ENCODE measurements at regions of chr3 and their contacts with region 1.

Region 1: DNA sequence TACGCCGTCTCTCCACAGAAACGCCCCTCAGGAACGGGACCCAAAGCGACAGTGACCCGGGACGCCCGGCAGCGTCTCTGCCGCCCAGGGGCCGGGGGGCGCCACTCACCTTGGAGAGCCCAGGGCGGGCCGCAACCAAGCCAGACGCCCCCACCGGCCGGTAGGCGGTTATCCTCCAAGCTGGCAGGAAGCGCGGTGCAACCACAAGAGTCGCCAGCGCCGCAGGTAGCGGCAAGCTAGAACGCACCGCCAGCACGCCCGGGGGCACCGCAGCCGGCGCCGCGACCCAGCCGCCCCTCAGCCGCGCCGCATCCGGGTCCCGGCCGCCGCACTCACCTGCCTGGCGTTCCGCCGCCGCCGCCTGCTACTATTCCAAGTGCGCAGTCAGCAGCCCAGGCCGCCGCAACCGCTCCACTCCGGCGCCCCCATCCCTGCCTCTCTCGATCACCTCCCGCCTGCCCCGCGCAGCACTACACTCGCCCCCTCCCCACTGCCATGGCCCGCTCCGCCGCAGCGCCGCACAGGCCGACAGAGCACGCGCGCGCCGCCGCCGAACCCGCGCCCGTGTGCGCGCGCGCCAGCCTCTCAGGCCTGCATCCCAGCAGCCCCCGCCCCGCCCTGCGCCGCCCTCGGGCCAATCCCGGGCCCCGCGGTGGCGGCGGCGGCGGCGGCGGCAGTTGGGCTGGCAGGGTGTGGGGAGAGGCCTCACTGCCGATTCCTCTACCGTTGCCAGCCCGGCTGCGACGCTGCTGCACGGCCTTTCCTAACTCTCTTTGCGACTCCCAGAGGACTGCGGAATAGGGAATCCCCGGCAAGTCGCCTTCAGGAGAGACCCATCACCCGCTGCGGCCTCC is at the start of gene PIK3CB:
- DNase-seq: peak; percentile 71 to 93 (median 87)
- ATAC-seq: peak; percentile 86
- H3K4me3 ChIP-seq: peak within 1 kb of the TSS; percentile 73 to 86
- H3K4me3 Mint-ChIP-seq: peak within 1 kb of the TSS; percentile 89
- H3K27ac ChIP-seq: peak within 1 kb of the TSS; percentile 68 to 87
- H3K27ac Mint-ChIP-seq: peak within 1 kb of the TSS; percentile 96
- H3K4me1 ChIP-seq: peaks cover 12% of the 10 kb centered on the region
- H3K4me1 Mint-ChIP-seq: peaks cover 28% of the 10 kb centered on the region
- H3K27me3 ChIP-seq: no peaks in the 10 kb centered on the region
- H3K27me3 Mint-ChIP-seq: no peaks in the 10 kb centered on the region
- CTCF ChIP-seq: no peak
- total RNA-seq, gene PIK3CB: 14.7 to 15.0 TPM

Region 2: DNA sequence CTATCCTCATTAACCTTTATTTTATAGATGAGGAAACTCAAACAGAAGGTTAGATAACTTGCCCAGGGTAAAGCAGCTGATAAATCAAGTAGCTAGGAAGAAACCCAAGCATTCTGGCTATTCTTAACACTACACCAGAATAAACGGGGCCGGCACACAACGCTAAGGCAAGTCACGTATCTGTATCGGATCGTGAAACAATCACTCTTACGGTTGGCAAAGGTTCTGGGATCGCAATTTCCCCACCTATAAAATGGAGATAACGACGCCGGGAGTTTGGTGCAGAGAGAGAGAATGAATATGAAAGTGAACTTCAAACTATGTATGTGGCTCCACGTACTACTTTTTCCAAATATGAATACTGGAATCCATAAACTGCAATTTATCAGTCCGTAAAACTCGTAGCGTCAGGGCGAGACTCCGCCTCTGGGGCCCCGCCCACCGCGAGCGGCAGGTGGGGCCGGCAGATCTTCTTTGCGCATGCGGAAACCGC is 647.7 kb before region 1 on chr3:
- CTCF ChIA-PET with region 1: no interaction called
- POLR2A ChIA-PET with region 1: no interaction called
- intact Hi-C with region 1: loop called (anchors 5 to 10 kb)
- DNase-seq: peak; percentile 79 to 95 (median 89)
- ATAC-seq: peak; percentile 95
- H3K4me3 ChIP-seq: peak overlapping the region; percentile 94
- H3K4me3 Mint-ChIP-seq: peak overlapping the region; percentile 97
- H3K27ac ChIP-seq: peak overlapping the region; percentile 90 to 92
- H3K27ac Mint-ChIP-seq: peak overlapping the region; percentile 98
- H3K4me1 ChIP-seq: peaks cover 29% of the 10 kb centered on the region
- H3K4me1 Mint-ChIP-seq: peaks cover 40% of the 10 kb centered on the region
- H3K27me3 ChIP-seq: peaks cover 0 to 3% of the 10 kb centered on the region in 2 experiments
- H3K27me3 Mint-ChIP-seq: peaks cover 5% of the 10 kb centered on the region
- CTCF ChIP-seq: no peak

Region 3: DNA sequence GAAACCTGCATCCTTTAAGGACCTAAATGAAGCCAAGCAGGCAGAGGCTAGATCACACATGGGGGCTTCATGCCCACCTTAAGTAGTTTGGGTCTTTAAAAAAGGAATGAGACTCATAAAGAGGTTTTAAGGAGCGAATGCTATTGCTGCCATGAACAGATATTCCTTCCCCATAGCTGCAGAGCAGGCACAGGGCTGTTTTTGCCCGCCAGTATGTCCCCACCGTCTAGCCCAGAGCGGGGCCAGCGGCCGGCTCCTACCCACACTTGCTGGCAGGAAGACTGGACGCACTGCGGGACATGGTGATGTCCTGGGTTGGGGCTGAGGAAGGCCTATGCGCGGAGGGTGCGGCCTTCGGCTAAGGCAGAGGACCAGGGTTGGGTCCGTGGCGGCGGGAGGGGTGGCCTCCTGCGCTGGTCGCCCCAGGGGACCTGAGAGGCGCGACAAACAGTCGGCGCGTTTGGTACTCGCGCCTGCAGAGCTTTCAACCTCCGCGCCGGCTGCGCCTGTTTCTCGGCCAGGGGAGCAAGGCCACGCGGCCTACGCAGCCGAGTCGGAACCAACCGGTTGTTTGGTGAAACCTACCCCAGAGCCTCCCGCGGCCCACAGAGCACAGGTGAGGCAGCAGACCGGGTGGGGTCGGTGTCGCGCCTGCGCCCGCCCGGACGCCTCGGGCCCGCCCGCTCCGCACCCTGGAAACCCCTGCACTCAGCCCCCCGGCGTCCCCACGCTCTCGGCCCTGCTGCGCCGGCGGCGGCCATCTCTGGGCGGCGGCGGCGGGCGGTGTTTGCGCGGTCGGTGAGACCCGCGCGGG is 226.1 kb before region 1 on chr3 and contains the start of gene FAIM:
- CTCF ChIA-PET with region 1: no interaction called
- POLR2A ChIA-PET with region 1: no interaction called
- intact Hi-C with region 1: loop called (anchors 5 kb)
- DNase-seq: peak; percentile 52 to 84 (median 70)
- ATAC-seq: peak; percentile 76
- H3K4me3 ChIP-seq: peak within 1 kb of the TSS; percentile 71 to 83
- H3K4me3 Mint-ChIP-seq: peak within 1 kb of the TSS; percentile 86
- H3K27ac ChIP-seq: peak within 1 kb of the TSS; percentile 84 to 86
- H3K27ac Mint-ChIP-seq: peak within 1 kb of the TSS; percentile 96
- H3K4me1 ChIP-seq: peaks cover 14% of the 10 kb centered on the region
- H3K4me1 Mint-ChIP-seq: peaks cover 15% of the 10 kb centered on the region
- H3K27me3 ChIP-seq: no peaks in the 10 kb centered on the region
- H3K27me3 Mint-ChIP-seq: no peaks in the 10 kb centered on the region
- CTCF ChIP-seq: no peak
- total RNA-seq, gene FAIM: 2.0 to 2.6 TPM

Region 4: GRCh38 chr3:138705675-138706074 is 128.9 kb before region 1 on chr3:
- CTCF ChIA-PET with region 1: no interaction called
- POLR2A ChIA-PET with region 1: no interaction called
- intact Hi-C with region 1: loop called in 1 of 2 experiments (anchors 5 kb)
- DNase-seq: no peak
- ATAC-seq: no peak
- H3K4me3 ChIP-seq: no peak overlapping the region
- H3K4me3 Mint-ChIP-seq: no peak overlapping the region
- H3K27ac ChIP-seq: no peak overlapping the region
- H3K27ac Mint-ChIP-seq: no peak overlapping the region
- H3K4me1 ChIP-seq: no peaks in the 10 kb centered on the region
- H3K4me1 Mint-ChIP-seq: no peaks in the 10 kb centered on the region
- H3K27me3 ChIP-seq: no peaks in the 10 kb centered on the region
- H3K27me3 Mint-ChIP-seq: no peaks in the 10 kb centered on the region
- CTCF ChIP-seq: no peak

Region 5: DNA sequence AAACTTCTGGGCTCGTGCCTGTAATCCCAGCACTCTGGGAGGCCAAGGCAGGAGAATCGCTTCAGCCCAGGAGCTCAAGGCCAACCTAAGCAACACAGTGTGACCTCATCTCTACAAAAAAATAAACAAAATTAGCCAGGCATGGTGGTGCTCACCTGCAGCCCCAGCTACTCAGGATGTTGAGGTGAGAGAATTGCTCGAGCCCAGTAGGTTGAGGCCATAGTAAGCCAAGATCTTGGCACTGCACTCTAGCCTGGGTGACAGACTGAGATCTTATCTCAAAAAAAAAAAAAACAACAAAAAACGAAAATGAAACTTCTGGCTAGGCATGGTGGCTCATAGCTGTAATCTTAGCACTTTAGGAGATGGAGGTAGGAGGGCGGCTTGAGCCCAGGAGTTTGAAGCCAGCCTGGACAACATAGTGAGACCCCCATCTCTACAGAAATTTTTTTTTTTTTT is 53.5 kb before region 1 on chr3:
- CTCF ChIA-PET with region 1: no interaction called
- POLR2A ChIA-PET with region 1: no interaction called
- intact Hi-C with region 1: loop called (anchors 2 kb)
- DNase-seq: peak; percentile 29 to 89 (median 55)
- ATAC-seq: peak; percentile 97
- H3K4me3 ChIP-seq: no peak overlapping the region
- H3K4me3 Mint-ChIP-seq: peak overlapping the region; percentile 54
- H3K27ac ChIP-seq: peak overlapping the region; percentile 39 to 66
- H3K27ac Mint-ChIP-seq: peak overlapping the region; percentile 92
- H3K4me1 ChIP-seq: peaks cover 11% of the 10 kb centered on the region
- H3K4me1 Mint-ChIP-seq: peaks cover 29% of the 10 kb centered on the region
- H3K27me3 ChIP-seq: no peaks in the 10 kb centered on the region
- H3K27me3 Mint-ChIP-seq: no peaks in the 10 kb centered on the region
- CTCF ChIP-seq: no peak

Region 6: DNA sequence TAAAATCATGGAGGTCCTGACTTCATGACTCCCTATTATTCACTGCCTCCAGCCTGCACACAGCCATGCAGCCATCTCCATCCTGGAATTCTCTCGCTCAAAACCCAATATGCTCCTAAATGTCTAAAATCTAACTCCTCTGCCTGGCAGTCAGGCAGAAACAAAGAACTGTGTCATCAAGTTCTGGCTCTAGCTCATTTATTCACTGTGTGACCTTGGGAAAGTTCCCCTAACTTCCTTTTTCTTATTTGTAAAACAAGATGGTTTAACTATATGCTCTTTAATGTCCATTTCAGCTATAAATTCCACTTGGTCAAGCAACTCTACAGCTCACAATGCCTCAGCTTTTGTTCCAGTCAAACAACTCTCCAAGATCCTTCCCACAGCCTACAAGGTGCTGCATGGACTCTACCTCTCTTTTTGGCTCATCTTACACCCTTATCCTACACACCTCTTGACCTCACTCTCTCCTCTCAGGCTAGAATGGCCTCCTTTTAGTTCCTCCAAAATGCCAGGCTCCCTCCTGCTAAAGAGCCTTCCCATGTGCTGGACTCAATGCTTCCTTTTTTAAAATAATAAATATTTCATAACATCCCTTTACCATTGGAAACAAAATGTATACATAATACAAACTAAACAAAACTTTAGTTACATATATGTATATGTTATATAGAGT is 16.3 kb before region 1 on chr3:
- CTCF ChIA-PET with region 1: no interaction called
- POLR2A ChIA-PET with region 1: no interaction called
- intact Hi-C with region 1: loop called (anchors 1 to 2 kb)
- DNase-seq: no peak
- ATAC-seq: no peak
- H3K4me3 ChIP-seq: no peak overlapping the region
- H3K4me3 Mint-ChIP-seq: no peak overlapping the region
- H3K27ac ChIP-seq: no peak overlapping the region
- H3K27ac Mint-ChIP-seq: peak overlapping the region; percentile 23
- H3K4me1 ChIP-seq: peaks cover 10% of the 10 kb centered on the region
- H3K4me1 Mint-ChIP-seq: peaks cover 42% of the 10 kb centered on the region
- H3K27me3 ChIP-seq: no peaks in the 10 kb centered on the region
- H3K27me3 Mint-ChIP-seq: no peaks in the 10 kb centered on the region
- CTCF ChIP-seq: no peak

Measured in CD8-positive, alpha-beta T cell (primary cell).